A673 (cell line): ENCODE measurements at regions of chrX and their contacts with region 1.

Region 1: DNA sequence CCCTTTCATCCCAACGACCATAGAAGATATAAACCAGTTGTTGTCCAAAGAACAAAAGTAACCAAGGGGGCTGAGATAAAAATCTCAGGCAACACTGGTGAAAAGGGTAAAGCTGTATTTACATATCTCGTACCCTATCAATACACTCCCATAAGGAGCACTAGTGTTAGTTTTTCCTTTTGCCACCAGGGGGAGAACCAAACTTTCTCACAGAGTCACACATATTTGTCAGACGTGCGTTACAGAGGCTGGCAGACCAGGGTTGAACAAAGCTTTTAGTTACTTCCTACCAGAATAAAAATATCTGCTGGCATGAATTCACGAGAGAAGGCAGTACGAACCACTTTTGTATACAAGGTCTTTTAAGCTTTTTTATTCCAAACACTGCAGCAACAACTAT is 88.3 kb downstream of the AMELX start:
- DNase-seq: peak; percentile 76
- H3K4me3 ChIP-seq: no peak overlapping the region
- H3K27ac ChIP-seq: no peak overlapping the region
- H3K4me1 ChIP-seq: no peaks in the 10 kb centered on the region
- H3K27me3 ChIP-seq: no peaks in the 10 kb centered on the region
- CTCF ChIP-seq: peak; percentile 70

Region 2: DNA sequence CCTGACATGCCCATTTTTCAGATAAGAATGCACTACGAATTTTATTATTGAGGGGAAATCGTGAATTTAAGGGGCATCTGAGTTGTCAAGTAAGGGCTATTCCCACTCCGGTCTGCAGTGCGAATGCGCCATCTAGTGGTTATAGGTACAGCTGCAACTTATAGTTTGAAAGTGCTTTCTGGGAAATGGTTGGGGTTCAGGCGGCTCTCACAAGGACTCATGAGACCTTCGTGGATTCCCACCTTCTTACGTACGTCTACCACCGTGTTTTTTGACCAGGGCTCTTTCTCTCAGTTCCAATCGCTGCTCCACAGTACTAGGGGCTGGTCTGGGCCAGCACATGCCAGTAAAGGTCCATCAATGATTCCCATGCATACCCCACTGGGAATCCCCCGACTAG is 388.9 kb after region 1 on chrX:
- CTCF ChIA-PET with region 1: no interaction called
- POLR2A ChIA-PET with region 1: no interaction called
- intact Hi-C with region 1: loop called (anchors 5 kb)
- DNase-seq: peak; percentile 68
- H3K4me3 ChIP-seq: no peak overlapping the region
- H3K27ac ChIP-seq: no peak overlapping the region
- H3K4me1 ChIP-seq: no peaks in the 10 kb centered on the region
- H3K27me3 ChIP-seq: no peaks in the 10 kb centered on the region
- CTCF ChIP-seq: peak; percentile 90